Heart left ventricle (tissue), 16 donors: ENCODE measurements at regions of chr10 and their contacts with region 1.

Region 1: DNA sequence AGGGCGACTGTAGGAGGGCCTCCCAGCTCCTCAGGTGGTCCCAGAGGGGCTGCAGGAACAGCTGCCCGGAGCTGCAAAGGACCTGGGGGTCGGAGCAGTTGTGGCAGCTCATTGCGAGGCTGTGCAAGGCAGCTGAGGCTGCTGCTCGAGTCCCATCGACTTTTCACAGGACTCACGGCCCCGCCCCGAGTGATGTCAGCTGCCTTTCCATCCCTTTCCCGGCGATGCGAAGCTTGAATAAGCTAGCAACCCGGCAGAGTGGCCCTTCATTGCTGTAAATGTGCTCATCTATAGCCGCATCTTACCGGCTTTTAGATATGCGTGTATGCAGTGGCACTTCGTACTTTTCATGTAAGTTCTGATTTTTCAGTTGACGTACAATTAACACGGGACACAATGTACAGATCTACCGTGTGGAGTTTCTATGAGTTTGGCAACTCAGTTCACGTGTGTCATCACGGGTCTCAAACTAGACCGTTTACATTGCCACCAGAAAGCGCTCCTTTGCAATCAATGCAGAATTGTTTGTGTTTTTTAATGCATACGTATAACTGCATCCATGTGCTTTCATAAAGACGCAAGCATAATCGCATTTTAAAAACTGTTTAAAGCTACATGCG is at the start of gene CH25H:
- DNase-seq: peak; percentile 79 to 86 (median 84)
- ATAC-seq: peak; percentile 70 to 93 (median 89)
- H3K4me3 ChIP-seq: peak within 1 kb of the TSS; percentile 25 to 68 (median 57)
- H3K27ac ChIP-seq: peak within 1 kb of the TSS; percentile 75 to 92 (median 84)
- H3K4me1 ChIP-seq: peaks cover 0 to 25% (median 11%) of the 10 kb centered on the region in 12 donors
- H3K27me3 ChIP-seq: peaks cover 0 to 36% (median 0%) of the 10 kb centered on the region in 9 donors
- CTCF ChIP-seq: no peak
- POLR2A ChIP-seq: peak in 1 of 2 donors; percentile 36
- total RNA-seq, gene CH25H: 0.28 to 3.5 (median 0.42) TPM

Region 2: GRCh38 chr10:89029785-89030437 is 177.4 kb before region 1 on chr10:
- intact Hi-C with region 1: loop called in 3 of 10 experiments (anchors 2 kb)
- DNase-seq: peak; percentile 79 to 83 (median 80)
- ATAC-seq: peak in 3 of 4 donors; percentile 64 to 76 (median 71)
- H3K4me3 ChIP-seq: peak overlapping the region in 1 of 12 donors; percentile 21
- H3K27ac ChIP-seq: peak overlapping the region in 2 of 12 donors; percentile 9 to 27
- H3K4me1 ChIP-seq: peaks cover 0 to 35% (median 8%) of the 10 kb centered on the region in 12 donors
- H3K27me3 ChIP-seq: no peaks in the 10 kb centered on the region
- CTCF ChIP-seq: peak; percentile 87 to 97 (median 94)
- POLR2A ChIP-seq: no peak

Region 3: GRCh38 chr10:89079961-89080360 is 127.3 kb before region 1 on chr10:
- intact Hi-C with region 1: loop called in 2 of 10 experiments (anchors 5 kb)
- DNase-seq: no peak
- ATAC-seq: peak in 1 of 4 donors; percentile 36
- H3K4me3 ChIP-seq: no peak overlapping the region
- H3K27ac ChIP-seq: peak overlapping the region in 1 of 12 donors; percentile 38
- H3K4me1 ChIP-seq: peaks cover 0 to 31% (median 3%) of the 10 kb centered on the region in 12 donors
- H3K27me3 ChIP-seq: no peaks in the 10 kb centered on the region
- CTCF ChIP-seq: no peak
- POLR2A ChIP-seq: no peak

Region 4: DNA sequence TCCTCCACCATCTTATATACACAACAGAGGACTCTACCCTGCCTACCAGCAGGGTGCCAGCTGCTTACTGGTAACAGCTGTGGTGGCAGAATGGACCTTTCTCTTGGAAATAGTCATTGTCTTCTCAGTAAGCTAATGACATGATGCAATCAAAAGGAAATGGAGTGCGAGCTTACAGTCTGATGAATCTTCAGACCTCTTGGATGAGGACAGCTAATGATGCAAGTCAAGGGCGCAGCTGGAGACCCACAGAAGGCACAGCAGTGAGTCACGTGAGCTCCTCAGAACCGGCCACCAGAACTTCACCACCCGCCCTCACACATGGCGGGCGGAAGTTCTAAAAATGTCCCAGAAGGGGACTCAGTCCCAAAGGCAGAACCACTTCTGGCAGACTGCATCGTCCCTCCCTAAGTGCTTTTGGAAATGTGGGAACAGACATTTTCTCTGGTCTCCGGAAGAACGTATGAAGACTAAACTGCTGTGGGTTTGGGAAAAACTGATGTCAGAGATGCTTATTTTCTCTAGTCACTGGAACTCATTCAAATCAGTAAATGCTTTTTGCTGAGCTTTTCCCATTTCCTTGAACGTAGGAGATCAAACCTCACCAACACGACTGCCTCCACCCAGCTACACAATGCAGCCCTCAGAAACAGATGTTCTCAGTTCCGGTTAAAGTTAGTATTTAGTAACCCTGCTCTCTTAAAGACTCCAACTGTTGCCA is 120.3 kb before region 1 on chr10:
- intact Hi-C with region 1: loop called in 2 of 10 experiments (anchors 5 kb)
- DNase-seq: peak; percentile 74 to 89 (median 85)
- ATAC-seq: peak; percentile 92 to 95 (median 93)
- H3K4me3 ChIP-seq: peak overlapping the region in 8 of 12 donors; percentile 13 to 42 (median 29)
- H3K27ac ChIP-seq: peak overlapping the region; percentile 62 to 92 (median 83)
- H3K4me1 ChIP-seq: peaks cover 3 to 67% (median 20%) of the 10 kb centered on the region in 12 donors
- H3K27me3 ChIP-seq: no peaks in the 10 kb centered on the region
- CTCF ChIP-seq: no peak
- POLR2A ChIP-seq: peak in 1 of 2 donors; percentile 16

Region 5: DNA sequence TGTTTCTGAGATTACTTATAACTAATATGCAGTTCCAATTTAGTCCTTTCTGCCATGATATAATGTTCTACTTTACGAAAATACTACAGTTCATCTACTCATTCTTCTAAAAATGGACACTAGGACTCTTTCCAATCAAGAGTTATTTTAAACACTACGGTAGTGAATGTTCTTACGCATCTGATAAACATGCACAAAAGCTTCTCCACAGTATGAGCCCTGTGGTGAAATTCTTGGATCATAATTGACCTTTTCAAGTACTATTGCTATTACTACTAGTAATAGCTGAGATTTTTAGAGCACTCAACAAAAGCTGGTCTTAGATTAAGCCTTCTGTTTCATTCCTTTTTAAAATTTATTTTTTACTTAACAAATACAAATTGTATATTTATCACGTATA is 106.6 kb before region 1 on chr10:
- intact Hi-C with region 1: loop called in 1 of 10 experiments (anchors 10 kb)
- DNase-seq: no peak
- ATAC-seq: peak; percentile 76 to 83 (median 80)
- H3K4me3 ChIP-seq: peak overlapping the region in 3 of 12 donors; percentile 4 to 11 (median 6)
- H3K27ac ChIP-seq: peak overlapping the region in 4 of 12 donors; percentile 1 to 40 (median 10)
- H3K4me1 ChIP-seq: peaks cover 0 to 12% (median 0%) of the 10 kb centered on the region in 12 donors
- H3K27me3 ChIP-seq: no peaks in the 10 kb centered on the region
- CTCF ChIP-seq: no peak
- POLR2A ChIP-seq: no peak

Region 6: DNA sequence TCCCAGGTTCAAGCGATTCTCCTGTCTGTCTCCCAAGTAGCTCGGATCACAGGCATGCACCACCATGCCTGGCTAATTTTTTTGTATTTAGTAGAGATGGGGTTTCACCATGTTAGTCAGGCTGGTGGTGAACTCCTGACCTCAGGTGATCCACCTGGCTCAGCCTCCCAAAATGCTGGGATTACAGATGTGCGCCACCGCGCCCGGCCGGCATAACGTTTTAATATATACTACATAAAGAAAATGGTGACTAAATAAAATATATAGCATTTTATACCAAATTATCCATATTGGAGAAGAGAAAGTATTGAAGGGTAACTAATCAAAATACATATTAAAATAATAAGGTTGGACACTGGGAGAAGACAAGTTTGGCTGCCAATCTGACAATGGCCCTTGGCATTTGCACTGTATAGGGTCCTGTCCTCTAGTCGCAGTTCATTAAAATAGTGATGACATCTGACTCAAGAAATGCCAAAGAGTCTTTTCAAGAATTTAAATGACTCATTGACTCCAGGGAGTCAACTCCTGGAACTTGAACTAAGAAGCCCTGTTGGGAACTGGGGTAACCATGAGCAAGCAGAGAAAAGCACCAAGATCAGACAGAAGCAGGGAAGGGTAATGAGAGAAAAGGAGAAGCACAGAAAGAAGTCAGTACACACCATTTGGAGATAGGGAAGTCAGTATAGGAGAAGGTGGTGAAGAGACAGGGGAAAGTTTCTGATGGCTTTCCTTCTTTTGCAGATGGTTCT is 91.2 kb before region 1 on chr10:
- intact Hi-C with region 1: loop called in 1 of 10 experiments (anchors 10 kb)
- DNase-seq: no peak
- ATAC-seq: peak in 3 of 4 donors; percentile 32 to 60 (median 38)
- H3K4me3 ChIP-seq: no peak overlapping the region
- H3K27ac ChIP-seq: peak overlapping the region in 3 of 12 donors; percentile 27 to 58 (median 31)
- H3K4me1 ChIP-seq: peaks cover 0 to 25% (median 0%) of the 10 kb centered on the region in 12 donors
- H3K27me3 ChIP-seq: no peaks in the 10 kb centered on the region
- CTCF ChIP-seq: no peak
- POLR2A ChIP-seq: no peak